ENCODE measurements at regions of chr2 and their contacts with region 1.

Region 1: DNA sequence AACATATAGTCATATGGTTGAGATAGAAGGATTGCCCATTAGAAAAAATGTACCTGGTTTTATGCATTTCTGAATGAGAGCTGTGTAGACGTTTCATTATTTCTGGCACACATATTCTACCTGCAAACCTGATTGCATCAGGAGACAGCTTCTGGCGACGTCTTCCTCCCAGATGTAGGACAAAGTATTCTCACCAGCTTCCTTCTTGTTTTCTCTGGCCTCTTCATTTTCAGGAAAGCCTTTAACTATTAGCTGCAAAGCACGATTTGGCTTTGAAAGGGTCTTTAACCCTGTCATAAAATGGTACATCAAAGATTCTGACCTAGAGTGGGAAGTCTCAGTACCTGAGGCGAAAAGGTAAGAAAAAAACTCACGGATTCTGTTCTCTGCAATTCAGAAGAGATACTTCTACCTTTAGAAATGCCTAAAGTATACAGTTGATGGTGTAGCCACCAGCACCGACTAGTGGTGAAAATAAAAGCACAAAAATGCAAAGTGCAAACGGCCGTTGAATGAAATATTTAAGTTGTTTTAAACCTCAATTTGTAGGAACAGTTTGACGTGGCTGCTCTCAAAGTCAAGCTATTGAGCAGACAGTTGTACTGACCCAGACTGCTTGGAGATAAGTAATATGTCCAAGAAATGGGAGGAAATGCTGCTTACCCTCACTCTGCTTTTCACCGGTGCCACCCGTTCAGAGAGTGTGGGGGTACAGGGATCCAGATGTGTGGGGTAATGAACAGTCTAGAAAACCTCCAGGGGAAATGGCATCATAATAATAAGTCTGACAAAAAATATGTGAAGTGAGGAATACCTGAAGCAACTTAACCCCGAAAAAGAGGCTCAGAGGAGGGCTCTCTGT is 20.2 kb downstream of the IL18RAP start:
- DNase-seq: peak in 1 of 2 donors; percentile 78
- ATAC-seq: peak; percentile 76 to 90 (median 88)
- H3K4me3 ChIP-seq: no peak overlapping the region
- H3K4me3 Mint-ChIP-seq: no peak overlapping the region
- H3K27ac ChIP-seq: peak overlapping the region; percentile 42
- H3K27ac Mint-ChIP-seq: peak overlapping the region; percentile 78 to 84
- H3K4me1 ChIP-seq: peaks cover 15% of the 10 kb centered on the region
- H3K4me1 Mint-ChIP-seq: peaks cover 14 to 17% of the 10 kb centered on the region in 2 donors
- H3K27me3 ChIP-seq: no peaks in the 10 kb centered on the region
- H3K27me3 Mint-ChIP-seq: no peaks in the 10 kb centered on the region
- CTCF ChIP-seq: peak; percentile 85

Region 2: DNA sequence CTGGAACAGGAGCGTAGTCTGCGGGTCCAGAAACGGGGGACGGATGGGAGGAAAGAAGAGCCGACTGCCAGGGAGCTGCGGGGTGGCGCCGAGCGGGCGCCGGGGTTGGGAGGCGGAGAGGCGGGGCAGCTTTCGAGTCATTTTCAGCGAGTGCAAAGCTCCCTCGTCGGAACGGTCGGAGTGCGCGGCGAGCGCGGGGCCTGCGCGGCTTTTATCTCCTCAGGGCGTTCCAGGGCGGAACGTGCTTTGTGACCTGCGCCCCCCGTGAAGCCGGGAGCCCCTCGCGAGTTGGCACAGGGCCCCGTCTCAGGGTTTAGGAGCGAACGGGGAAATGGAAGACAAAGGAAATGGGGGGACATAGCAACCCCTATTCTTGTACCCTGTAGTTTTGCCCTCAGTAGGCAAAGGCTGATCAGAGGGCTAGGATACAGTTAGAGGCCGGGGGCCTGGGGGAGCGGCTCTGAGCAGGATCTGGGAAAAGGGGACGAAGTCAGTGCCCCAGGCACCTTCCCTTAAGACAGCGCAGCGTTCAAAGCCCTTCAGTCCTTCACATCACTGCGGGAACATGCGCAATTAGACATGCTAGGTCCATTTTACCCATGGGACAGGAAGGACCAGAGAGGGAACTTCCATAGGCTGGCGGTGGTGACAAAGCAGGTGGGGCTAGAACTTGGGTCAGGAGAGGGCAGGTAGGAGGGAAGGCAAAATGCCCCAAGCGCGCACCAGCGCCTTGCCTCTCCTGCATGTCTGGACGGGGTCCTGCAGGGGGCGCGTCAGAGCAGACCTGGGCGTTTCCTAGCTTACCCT is 192.0 kb before region 1 on chr2:
- intact Hi-C with region 1: loop called (anchors 5 kb)
- DNase-seq: peak; percentile 59 to 80
- ATAC-seq: peak; percentile 66 to 82 (median 82)
- H3K4me3 ChIP-seq: peak overlapping the region; percentile 15
- H3K4me3 Mint-ChIP-seq: peak overlapping the region; percentile 92
- H3K27ac ChIP-seq: no peak overlapping the region
- H3K27ac Mint-ChIP-seq: peak overlapping the region in 1 of 2 donors; percentile 70
- H3K4me1 ChIP-seq: peaks cover 31% of the 10 kb centered on the region
- H3K4me1 Mint-ChIP-seq: peaks cover 35% of the 10 kb centered on the region in 2 donors
- H3K27me3 ChIP-seq: peaks cover 2% of the 10 kb centered on the region
- H3K27me3 Mint-ChIP-seq: peaks cover 0 to 8% of the 10 kb centered on the region in 2 donors
- CTCF ChIP-seq: peak; percentile 70

Region 3: GRCh38 chr2:102301867-102302362 is 141.3 kb before region 1 on chr2:
- intact Hi-C with region 1: loop called (anchors 1 kb)
- DNase-seq: peak; percentile 24 to 77
- ATAC-seq: peak; percentile 96 to 100 (median 96)
- H3K4me3 ChIP-seq: no peak overlapping the region
- H3K4me3 Mint-ChIP-seq: peak overlapping the region; percentile 15
- H3K27ac ChIP-seq: no peak overlapping the region
- H3K27ac Mint-ChIP-seq: peak overlapping the region in 1 of 2 donors; percentile 46
- H3K4me1 ChIP-seq: peaks cover 3% of the 10 kb centered on the region
- H3K4me1 Mint-ChIP-seq: peaks cover 13 to 17% of the 10 kb centered on the region in 2 donors
- H3K27me3 ChIP-seq: no peaks in the 10 kb centered on the region
- H3K27me3 Mint-ChIP-seq: peaks cover 15 to 16% of the 10 kb centered on the region in 2 donors
- CTCF ChIP-seq: peak; percentile 56

Region 4: GRCh38 chr2:102418421-102418961 is 24.7 kb before region 1 on chr2:
- intact Hi-C with region 1: no loop called
- DNase-seq: peak in 1 of 2 donors; percentile 72
- ATAC-seq: peak; percentile 60 to 83 (median 77)
- H3K4me3 ChIP-seq: peak overlapping the region; percentile 71
- H3K4me3 Mint-ChIP-seq: peak overlapping the region; percentile 97
- H3K27ac ChIP-seq: peak overlapping the region; percentile 77
- H3K27ac Mint-ChIP-seq: peak overlapping the region in 1 of 2 donors; percentile 93
- H3K4me1 ChIP-seq: peaks cover 44% of the 10 kb centered on the region
- H3K4me1 Mint-ChIP-seq: peaks cover 82 to 88% of the 10 kb centered on the region in 2 donors
- H3K27me3 ChIP-seq: no peaks in the 10 kb centered on the region
- H3K27me3 Mint-ChIP-seq: no peaks in the 10 kb centered on the region
- CTCF ChIP-seq: no peak